ENCODE measurements at regions of chr20 and their contacts with region 1.

Region 1: GRCh38 chr20:36861875-36862801 is 13.8 kb upstream of the TLDC2 start:
- DNase-seq: peak in 1 of 2 experiments; percentile 61
- H3K4me3 ChIP-seq: peak overlapping the region; percentile 44 to 70 (median 50)
- H3K27ac ChIP-seq: no peak overlapping the region
- H3K4me1 ChIP-seq: peaks cover 3 to 23% (median 17%) of the 10 kb centered on the region in 4 experiments
- H3K27me3 ChIP-seq: peaks cover 0 to 10% (median 6%) of the 10 kb centered on the region in 4 experiments; a peak in 4 of 7 replicates
- CTCF ChIP-seq: no peak
- EP300 ChIP-seq: no peak
- POLR2A ChIP-seq: peak in 1 of 2 experiments; percentile 54; a peak in 2 of 3 replicates
- RAD21 ChIP-seq: no peak

Region 2: DNA sequence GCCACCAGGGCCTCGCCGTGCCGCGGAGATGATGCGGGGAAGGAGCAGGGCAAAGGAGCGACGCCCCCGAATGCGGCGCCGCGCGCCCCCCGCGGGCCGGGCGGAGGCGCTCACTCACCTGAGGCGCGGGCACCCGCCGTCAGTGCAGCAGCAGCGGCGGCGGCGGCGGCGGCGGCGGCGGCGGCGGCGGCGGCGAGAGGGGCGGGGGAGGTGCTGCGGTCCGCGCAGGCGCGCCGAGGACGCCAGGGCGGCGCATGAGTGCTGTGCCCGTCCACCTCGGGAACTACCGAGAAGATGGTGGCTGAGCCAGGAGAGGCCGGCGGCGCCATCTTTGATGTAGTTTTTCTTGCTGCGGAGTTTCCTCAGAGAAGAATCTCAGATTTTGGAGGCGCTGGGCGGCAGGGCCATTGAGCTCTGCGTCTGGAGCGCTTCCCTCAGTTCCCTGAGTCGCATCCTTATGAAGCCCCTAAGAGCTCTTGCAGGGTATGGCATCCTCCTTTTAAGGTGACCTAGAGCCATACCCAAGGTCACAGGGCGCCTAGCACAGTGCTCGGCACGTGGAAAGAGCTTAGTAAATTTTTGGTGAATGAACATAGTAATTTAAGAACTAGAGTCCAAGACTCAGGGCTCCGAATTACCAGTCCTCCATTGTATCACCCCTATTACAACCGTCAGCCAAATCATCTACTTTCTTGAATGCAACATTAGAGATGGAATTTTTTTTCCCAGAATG is 116.0 kb before region 1 on chr20 and contains the start of gene NDRG3:
- CTCF ChIA-PET with region 1: no interaction called
- POLR2A ChIA-PET with region 1: no interaction called
- DNase-seq: peak; percentile 85 to 89
- H3K4me3 ChIP-seq: peak within 1 kb of the TSS; percentile 60 to 92 (median 87)
- H3K27ac ChIP-seq: peak within 1 kb of the TSS; percentile 22; the same call in 1 of the 2 replicates
- H3K4me1 ChIP-seq: peaks cover 0 to 7% (median 4%) of the 10 kb centered on the region in 4 experiments; a peak in 4 of 7 replicates
- H3K27me3 ChIP-seq: no peaks in the 10 kb centered on the region
- CTCF ChIP-seq: no peak
- EP300 ChIP-seq: no peak
- POLR2A ChIP-seq: peak in 1 of 2 experiments; percentile 28; a peak in 1 of 3 replicates
- RAD21 ChIP-seq: no peak; a peak in 2 of 4 replicates
- total RNA-seq, gene NDRG3: 32.3 and 32.5 TPM in 2 replicates

Region 3: DNA sequence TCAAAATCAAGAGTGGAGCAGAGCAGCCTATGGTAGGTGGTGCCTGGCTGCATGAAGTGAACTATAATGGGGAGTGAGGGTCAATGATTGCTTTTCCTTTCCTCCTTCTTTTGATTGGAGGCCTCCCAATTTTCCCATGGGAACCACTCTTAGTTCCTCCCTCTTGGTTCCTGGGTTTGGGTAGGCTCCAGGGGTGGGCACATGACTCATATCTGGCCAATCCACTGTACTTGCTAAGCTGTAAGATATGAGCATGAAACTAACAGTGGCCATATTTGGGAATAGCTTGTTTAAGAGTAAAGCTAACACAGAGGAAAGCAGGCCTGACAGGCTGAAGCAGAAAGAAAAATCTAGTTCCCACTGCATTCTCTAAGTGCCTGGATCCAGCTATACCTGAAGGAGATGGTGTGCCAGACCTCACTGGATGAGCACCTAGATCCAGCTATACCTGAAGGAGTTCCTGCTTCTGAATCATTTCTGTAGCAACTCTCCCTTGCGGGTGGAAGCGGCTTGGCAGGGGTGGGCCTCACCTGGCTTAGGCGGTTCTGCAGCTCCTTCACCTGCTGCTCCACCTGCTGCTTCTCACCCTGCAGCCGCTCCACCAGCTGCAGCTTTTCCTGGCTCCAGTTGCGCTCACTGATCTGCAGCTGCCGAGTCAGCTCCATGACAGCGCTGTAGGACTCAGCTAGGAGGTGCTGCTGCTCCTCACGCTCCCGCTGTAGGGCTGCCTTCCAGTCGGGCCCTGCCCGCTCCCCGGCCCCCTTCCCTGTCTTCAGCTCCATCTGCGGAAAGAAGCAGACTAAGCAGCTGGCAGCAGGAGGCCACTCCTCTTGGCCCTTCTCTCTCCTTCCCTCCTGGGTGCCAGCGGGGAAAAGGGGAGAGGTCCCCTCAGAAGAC is 59.6 kb before region 1 on chr20:
- CTCF ChIA-PET with region 1: interaction called, 10 read pairs
- POLR2A ChIA-PET with region 1: no interaction called
- DNase-seq: no peak
- H3K4me3 ChIP-seq: no peak overlapping the region
- H3K27ac ChIP-seq: no peak overlapping the region
- H3K4me1 ChIP-seq: no peaks in the 10 kb centered on the region
- H3K27me3 ChIP-seq: no peaks in the 10 kb centered on the region
- CTCF ChIP-seq: peak in 2 of 3 experiments; percentile 3 to 25; a peak in 3 of 4 replicates
- EP300 ChIP-seq: no peak
- POLR2A ChIP-seq: no peak
- RAD21 ChIP-seq: peak in 1 of 2 experiments; percentile 26; a peak in 2 of 4 replicates

Region 4: DNA sequence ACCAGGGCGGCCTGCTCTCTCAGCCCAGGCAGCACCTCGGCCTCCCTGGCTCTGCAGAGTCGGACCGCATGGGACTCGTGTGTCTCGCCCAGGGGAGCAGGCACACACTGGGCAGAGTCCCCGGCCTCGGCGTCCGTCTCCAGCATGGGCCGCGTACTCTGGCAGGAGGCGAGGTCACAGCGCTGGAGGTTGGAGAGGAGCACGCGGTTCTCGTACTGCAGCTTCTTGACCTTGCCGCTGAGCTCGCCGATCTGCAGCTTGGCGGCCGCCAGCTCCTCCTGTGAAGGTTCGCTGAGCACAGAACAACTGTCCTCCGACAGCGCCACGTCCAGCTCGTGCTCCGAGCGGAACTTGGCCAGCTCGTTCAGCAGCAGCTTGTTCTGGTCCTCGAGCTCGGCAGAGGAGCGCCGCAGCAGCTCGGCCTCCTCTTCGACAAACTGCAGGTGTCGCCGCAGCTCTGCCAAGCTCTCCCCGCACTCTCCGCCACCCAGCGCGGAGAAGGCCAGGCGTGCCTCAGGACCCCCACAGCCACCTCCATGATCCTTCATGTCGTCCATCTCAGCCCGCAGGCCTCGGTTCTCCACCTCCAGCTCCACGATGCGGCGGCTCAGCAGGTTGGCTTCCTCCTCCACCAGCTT is 46.6 kb before region 1 on chr20:
- CTCF ChIA-PET with region 1: interaction called, 19 read pairs
- POLR2A ChIA-PET with region 1: interaction called, 3 read pairs
- DNase-seq: no peak
- H3K4me3 ChIP-seq: no peak overlapping the region
- H3K27ac ChIP-seq: no peak overlapping the region
- H3K4me1 ChIP-seq: peaks cover 3 to 6% (median 5%) of the 10 kb centered on the region in 4 experiments; a peak in 5 of 7 replicates
- H3K27me3 ChIP-seq: no peaks in the 10 kb centered on the region
- CTCF ChIP-seq: peak; percentile 27 to 38 (median 37)
- EP300 ChIP-seq: no peak
- POLR2A ChIP-seq: no peak
- RAD21 ChIP-seq: peak; percentile 56 to 62

Region 5: DNA sequence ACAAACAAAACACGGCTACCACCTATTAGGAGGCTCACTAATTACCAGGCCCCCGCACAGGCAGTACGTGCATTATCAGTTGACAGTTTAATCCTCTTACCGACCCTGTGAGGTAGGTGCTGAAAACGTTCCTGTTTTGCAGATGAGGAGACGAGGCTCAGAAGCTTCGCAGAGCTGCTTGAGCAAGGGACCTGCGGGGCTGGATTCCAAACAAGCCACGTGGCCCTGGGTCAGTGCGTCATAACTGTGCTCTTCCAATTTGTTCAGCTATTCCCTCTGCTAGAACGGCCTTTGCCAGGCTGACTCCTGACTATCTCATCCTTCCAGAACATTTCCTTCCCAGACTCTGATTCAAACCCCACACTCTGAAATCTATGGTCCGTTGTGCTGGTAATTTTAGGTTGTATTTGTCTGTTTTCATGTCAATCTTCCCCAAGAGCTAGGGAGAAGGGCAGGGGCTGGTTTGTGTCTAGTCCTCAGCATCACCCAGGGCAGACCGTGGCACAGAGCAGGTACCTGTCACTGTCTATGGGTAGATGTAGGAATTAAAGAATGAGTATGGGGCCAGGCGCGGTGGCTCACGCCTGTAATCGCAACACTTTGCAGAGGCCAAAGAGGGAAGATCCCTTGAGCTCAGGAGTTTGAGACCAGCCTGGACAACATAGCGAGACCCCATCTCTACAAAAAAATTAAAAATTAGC is 15.0 kb before region 1 on chr20:
- CTCF ChIA-PET with region 1: interaction called, 41 read pairs
- POLR2A ChIA-PET with region 1: interaction called, 54 read pairs
- DNase-seq: no peak
- H3K4me3 ChIP-seq: no peak overlapping the region
- H3K27ac ChIP-seq: no peak overlapping the region
- H3K4me1 ChIP-seq: peaks cover 0 to 7% (median 4%) of the 10 kb centered on the region in 4 experiments; a peak in 4 of 7 replicates
- H3K27me3 ChIP-seq: no peaks in the 10 kb centered on the region
- CTCF ChIP-seq: no peak
- EP300 ChIP-seq: no peak
- POLR2A ChIP-seq: no peak
- RAD21 ChIP-seq: no peak

Region 6: DNA sequence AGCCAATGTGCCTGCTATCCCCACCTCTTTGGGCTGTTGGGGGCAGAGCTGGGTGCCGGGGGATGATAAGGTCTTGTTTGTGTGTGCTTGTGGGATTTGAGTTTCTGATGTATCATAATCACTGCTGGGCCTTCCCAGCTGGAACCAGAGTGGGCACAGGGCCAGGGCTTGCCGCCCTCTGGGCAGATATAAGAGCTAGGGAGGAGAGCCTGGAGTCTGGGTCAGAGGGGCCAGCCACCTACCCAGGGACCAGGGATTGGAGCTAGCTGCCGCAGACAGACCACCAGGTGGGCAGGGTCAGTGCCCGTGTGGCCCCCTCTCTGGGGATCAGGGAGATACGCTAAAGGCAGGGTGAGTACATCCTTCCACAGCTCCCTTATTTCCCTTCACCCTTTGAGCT is 10.7 kb after region 1 on chr20:
- CTCF ChIA-PET with region 1: interaction called, 13 read pairs
- POLR2A ChIA-PET with region 1: interaction called, 7 read pairs
- DNase-seq: no peak
- H3K4me3 ChIP-seq: no peak overlapping the region
- H3K27ac ChIP-seq: no peak overlapping the region
- H3K4me1 ChIP-seq: peaks cover 0 to 3% (median under 1%) of the 10 kb centered on the region in 4 experiments; a peak in 4 of 7 replicates
- H3K27me3 ChIP-seq: no peaks in the 10 kb centered on the region; a peak in 1 of 7 replicates
- CTCF ChIP-seq: no peak
- EP300 ChIP-seq: no peak
- POLR2A ChIP-seq: no peak
- RAD21 ChIP-seq: no peak